Thyroid gland (tissue), 4 donors: ENCODE measurements at regions of chr16 and their contacts with region 1.

Region 1: GRCh38 chr16:57802341-57803133 is at the start of gene KIFC3:
- DNase-seq: peak; percentile 81 to 82
- H3K4me3 ChIP-seq: peak within 1 kb of the TSS; percentile 55 to 66 (median 55)
- H3K27ac ChIP-seq: peak within 1 kb of the TSS; percentile 91 to 99 (median 98)
- H3K4me1 ChIP-seq: peaks cover 60 to 78% of the 10 kb centered on the region in 2 donors
- H3K27me3 ChIP-seq: no peaks in the 10 kb centered on the region
- CTCF ChIP-seq: peak in 3 of 6 experiments; percentile 15 to 44 (median 38)
- POLR2A ChIP-seq: peak; percentile 44 to 56
- total RNA-seq, gene KIFC3: 88.8 to 153 (median 132) TPM

Region 2: GRCh38 chr16:57994778-57995177 is 192.2 kb after region 1 on chr16:
- intact Hi-C with region 1: loop called (anchors 10 kb)
- DNase-seq: peak; percentile 58 to 59
- H3K4me3 ChIP-seq: no peak overlapping the region
- H3K27ac ChIP-seq: peak overlapping the region; percentile 90 to 95 (median 91)
- H3K4me1 ChIP-seq: peaks cover 70 to 86% of the 10 kb centered on the region in 2 donors
- H3K27me3 ChIP-seq: no peaks in the 10 kb centered on the region
- CTCF ChIP-seq: peak in 3 of 6 experiments; percentile 14 to 28 (median 22)
- POLR2A ChIP-seq: no peak

Region 3: DNA sequence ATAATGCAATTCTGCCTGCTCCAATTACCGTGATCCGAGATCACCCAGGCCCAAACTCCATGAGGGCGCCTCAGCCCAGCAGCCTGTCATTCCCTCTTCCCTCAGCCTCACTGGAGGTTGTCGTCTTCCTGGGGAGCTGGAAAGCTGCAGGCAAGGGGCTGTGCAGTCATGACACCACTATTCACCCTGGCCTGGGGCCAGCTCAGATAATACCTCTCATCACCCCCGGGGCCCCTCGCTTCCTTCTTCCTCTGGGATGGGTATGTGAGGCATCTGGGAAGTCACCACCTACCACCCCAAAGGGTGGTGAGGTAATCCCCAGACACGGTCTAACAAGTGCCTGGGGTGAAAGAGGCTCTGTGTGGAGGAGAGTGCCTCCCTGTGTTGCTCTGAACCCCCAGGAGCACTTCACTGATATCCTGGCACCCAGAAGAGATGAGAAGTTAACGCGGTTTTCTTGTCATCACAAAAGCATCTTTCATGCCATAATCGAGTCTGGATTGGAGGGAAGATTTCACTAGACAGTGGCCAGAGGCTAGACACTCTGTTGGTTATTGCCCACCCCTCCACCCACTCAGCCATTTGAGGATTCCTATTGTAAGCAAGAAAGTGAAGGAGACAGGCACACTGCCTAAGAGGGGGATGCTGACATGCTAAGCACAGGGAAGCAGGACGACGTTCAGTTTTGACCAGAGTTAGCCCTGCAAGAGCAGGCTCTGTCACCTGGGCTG is 308.2 kb after region 1 on chr16:
- intact Hi-C with region 1: no loop called
- DNase-seq: no peak
- H3K4me3 ChIP-seq: no peak overlapping the region
- H3K27ac ChIP-seq: no peak overlapping the region
- H3K4me1 ChIP-seq: peaks cover 0 to 3% of the 10 kb centered on the region in 2 donors
- H3K27me3 ChIP-seq: no peaks in the 10 kb centered on the region
- CTCF ChIP-seq: no peak
- POLR2A ChIP-seq: no peak